Activated CD4-positive, alpha-beta T cell treated with anti-CD3 and anti-CD28 coated beads, Interleukin-2, amount 10 ng/mL, durations not matched to agents 24 days and 14 days (primary cell): ENCODE measurements at regions of chr6 and their contacts with region 1.

Region 1: DNA sequence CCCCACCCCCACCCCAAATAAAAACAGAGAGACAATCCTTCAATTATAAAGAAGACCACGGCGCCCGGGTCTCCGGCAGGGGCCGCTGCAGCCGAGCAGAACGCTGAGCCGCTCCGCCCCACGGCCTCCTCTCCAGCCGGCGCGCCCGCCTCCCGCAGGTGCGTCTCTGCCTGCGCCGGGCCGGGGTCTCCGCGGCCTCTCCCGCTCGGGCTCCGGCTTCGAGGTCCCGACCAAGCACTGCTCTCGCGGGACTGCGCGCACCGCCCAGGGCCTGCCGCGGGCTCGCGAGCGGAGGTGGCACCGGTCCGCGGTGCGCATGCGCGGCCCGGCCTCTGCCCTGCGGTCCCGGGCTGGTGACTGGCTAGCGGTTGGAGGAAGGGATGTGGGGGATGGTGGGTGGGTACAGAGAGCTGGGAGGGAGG is 241 bp upstream of the SIRT5 start:
- DNase-seq: peak; percentile 97
- H3K4me3 Mint-ChIP-seq: peak overlapping the region; percentile 97
- H3K27ac Mint-ChIP-seq: peak overlapping the region; percentile 100
- H3K4me1 Mint-ChIP-seq: peaks cover 18% of the 10 kb centered on the region
- H3K27me3 Mint-ChIP-seq: no peaks in the 10 kb centered on the region

Region 2: DNA sequence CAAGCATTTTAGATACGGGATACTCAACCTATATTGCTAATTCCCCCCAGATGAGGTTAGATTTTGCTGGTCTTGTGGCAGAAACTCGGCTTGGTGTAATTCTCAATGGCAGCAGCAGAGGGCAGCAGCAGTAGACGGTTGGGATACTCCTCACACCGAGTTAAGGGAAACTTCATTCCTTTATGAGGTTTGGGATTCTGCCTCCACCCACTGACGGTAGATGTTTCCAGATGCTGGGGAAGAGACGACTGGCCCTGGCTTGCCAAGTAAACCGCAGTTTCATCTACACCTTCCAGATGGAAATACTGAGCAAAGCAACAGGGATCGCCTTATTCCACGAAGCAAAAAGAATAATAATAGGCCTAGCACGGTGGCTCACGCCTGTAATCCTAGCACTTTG is 237.6 kb before region 1 on chr6:
- intact Hi-C with region 1: loop called (anchors 1 kb)
- DNase-seq: peak; percentile 93
- H3K4me3 Mint-ChIP-seq: no peak overlapping the region
- H3K27ac Mint-ChIP-seq: no peak overlapping the region
- H3K4me1 Mint-ChIP-seq: peaks cover 34% of the 10 kb centered on the region
- H3K27me3 Mint-ChIP-seq: no peaks in the 10 kb centered on the region

Region 3: GRCh38 chr6:13454286-13455221 is 119.6 kb before region 1 on chr6:
- intact Hi-C with region 1: loop called (anchors 1 kb)
- DNase-seq: peak; percentile 85
- H3K4me3 Mint-ChIP-seq: peak overlapping the region; percentile 42
- H3K27ac Mint-ChIP-seq: peak overlapping the region; percentile 93
- H3K4me1 Mint-ChIP-seq: peaks cover 43% of the 10 kb centered on the region
- H3K27me3 Mint-ChIP-seq: no peaks in the 10 kb centered on the region

Region 4: DNA sequence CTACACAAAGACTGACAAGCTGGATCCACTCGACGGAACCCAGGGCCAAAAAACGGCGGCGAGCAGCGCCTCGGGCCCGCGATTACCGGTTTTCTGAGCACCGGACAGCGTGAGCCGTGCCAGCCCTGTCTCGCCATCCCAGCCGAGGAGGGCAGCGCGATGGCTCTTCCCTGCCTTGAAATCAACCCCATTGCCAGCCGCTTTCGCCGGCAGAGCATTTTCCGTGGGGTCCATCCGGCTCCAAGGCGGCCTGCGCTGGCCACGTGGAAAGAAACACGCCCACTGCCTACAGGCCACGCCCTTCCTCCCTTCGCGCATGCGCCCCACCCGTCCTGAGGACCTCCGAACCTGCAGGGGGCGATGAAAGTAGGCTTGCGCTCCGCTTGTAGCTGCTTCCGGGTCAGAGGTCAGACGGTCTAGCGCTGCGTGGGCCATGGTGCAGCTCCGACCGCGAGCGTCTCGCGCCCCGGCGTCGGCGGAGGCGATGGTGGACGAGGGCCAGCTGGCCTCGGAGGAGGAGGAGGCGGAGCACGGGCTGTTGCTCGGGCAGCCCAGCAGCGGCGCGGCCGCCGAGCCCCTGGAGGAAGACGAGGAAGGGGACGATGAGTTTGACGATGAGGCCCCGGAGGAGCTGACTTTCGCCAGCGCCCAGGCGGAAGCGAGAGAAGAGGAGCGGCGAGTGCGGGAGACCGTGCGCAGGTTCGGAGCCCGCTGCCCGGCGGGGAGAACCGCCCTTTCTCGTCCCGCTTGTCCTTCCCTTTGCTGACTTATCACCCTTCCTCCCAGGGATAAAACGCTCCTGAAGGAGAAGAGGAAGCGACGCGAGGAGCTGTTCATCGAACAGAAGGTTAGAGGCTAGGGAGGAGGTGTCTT is 41.0 kb after region 1 on chr6 and contains the start of gene NOL7:
- intact Hi-C with region 1: loop called (anchors 1 kb)
- DNase-seq: peak; percentile 100
- H3K4me3 Mint-ChIP-seq: peak within 1 kb of the TSS; percentile 92
- H3K27ac Mint-ChIP-seq: peak within 1 kb of the TSS; percentile 96
- H3K4me1 Mint-ChIP-seq: peaks cover 33% of the 10 kb centered on the region
- H3K27me3 Mint-ChIP-seq: no peaks in the 10 kb centered on the region
- total RNA-seq, gene NOL7: 103 and 104 TPM in 2 replicates

Region 5: DNA sequence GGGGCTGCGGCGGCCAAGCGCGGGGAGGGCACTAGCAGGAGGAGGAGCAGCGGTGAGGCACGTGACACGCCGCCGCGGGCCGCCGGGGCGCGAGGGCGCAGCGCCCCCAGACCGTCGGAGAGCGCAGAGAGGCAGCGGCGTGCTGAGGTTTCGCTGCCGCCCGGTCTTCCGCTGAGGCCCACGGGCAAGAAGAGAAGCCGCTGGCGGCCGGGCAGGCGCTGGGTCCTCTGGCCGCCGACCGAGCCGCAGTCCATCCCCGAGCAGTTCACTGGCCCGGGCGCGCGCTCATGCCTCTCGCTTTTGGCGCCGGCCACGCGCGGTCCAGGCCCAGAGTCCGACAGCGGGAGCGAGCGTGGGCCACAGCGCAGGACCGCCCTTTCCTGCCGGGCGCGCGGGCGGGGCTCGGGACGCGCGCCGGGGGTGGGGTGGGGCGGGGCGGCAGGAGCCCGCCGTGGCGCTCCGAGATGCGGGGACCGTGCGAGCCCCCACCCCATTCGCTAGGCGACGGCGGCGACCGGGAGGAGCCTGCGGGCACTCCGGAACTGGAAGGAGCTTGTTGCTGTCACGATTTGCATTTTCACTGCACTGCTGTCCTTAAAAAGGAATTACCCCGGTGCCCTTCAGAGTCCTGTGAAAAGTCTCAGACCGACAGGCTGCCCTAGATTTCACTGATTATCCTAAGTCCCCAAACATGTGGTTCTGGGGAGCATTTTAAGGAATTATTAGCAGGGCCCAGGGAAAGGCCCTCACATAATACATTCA is 240.2 kb after region 1 on chr6 and contains the start of gene MCUR1:
- intact Hi-C with region 1: loop called (anchors 1 kb)
- DNase-seq: peak; percentile 95
- H3K4me3 Mint-ChIP-seq: peak within 1 kb of the TSS; percentile 88
- H3K27ac Mint-ChIP-seq: peak within 1 kb of the TSS; percentile 84
- H3K4me1 Mint-ChIP-seq: peaks cover 28% of the 10 kb centered on the region
- H3K27me3 Mint-ChIP-seq: peaks cover 16% of the 10 kb centered on the region
- total RNA-seq, gene MCUR1: 39.0 and 43.7 TPM in 2 replicates